Sigmoid colon (tissue), 7 donors: ENCODE measurements at regions of chr1 and their contacts with region 1.

Region 1: GRCh38 chr1:27556781-27557595 is 47.0 kb downstream of the AHDC1 start:
- DNase-seq: peak; percentile 98
- H3K4me3 ChIP-seq: peak overlapping the region in 3 of 4 donors; percentile 13 to 34 (median 34)
- H3K27ac ChIP-seq: peak overlapping the region; percentile 82 to 98 (median 90)
- H3K4me1 ChIP-seq: peaks cover 0 to 73% (median 68%) of the 10 kb centered on the region in 4 donors
- H3K27me3 ChIP-seq: no peaks in the 10 kb centered on the region
- CTCF ChIP-seq: peak; percentile 85 to 96 (median 94)
- EP300 ChIP-seq: no peak
- POLR2A ChIP-seq: no peak

Region 2: GRCh38 chr1:27402349-27402754 is 154.6 kb before region 1 on chr1:
- intact Hi-C with region 1: loop called (anchors 5 kb)
- DNase-seq: peak; percentile 91
- H3K4me3 ChIP-seq: no peak overlapping the region
- H3K27ac ChIP-seq: peak overlapping the region; percentile 79 to 88 (median 81)
- H3K4me1 ChIP-seq: peaks cover 0 to 83% (median 67%) of the 10 kb centered on the region in 4 donors
- H3K27me3 ChIP-seq: no peaks in the 10 kb centered on the region
- CTCF ChIP-seq: peak; percentile 14 to 60 (median 44)
- EP300 ChIP-seq: no peak
- POLR2A ChIP-seq: no peak

Region 3: DNA sequence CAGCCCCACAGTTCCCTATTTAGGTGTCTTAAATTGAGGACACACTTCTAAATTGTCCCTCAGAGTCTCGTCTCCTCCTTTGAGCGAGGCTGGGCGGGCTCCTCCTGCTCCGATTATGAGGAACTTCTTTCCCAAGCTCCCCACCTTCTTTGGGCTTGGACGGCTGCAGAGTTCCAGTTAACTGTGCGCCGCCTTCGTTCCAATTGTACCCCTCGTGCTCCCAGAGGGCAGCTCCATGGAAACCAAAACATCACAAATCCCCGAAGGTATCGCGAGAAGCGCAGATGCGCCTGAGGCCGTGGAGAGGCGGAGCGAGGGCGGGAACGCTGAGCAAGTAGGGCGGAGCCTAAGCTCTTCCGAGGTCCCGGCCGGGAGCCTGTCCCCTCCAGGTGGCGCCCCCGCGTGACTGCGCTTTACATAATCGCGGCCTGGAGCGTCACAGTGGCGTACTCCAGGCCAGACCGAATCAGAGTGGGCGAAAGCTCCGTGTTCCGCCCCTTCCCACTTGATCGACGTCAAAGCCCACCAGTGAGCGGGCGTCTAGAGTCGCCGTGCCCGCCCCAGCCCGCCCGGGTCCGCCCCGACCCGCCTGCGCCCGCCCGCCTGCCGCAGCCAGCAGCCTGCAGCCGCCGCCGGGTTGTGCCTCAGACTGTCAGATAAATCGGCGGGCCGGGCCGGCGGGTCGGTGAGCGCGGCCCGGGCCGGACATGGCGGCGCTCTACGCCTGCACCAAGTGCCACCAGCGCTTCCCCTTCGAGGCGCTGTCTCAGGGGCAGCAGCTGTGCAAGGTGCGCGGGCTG is 168.6 kb after region 1 on chr1 and contains the start of gene FAM76A:
- intact Hi-C with region 1: no loop called
- DNase-seq: peak; percentile 100
- H3K4me3 ChIP-seq: peak within 1 kb of the TSS; percentile 76 to 100 (median 87)
- H3K27ac ChIP-seq: peak within 1 kb of the TSS; percentile 93 to 99 (median 97)
- H3K4me1 ChIP-seq: peaks cover 0 to 19% (median 17%) of the 10 kb centered on the region in 4 donors
- H3K27me3 ChIP-seq: no peaks in the 10 kb centered on the region
- CTCF ChIP-seq: peak in 1 of 4 experiments; percentile 20
- EP300 ChIP-seq: no peak
- POLR2A ChIP-seq: peak in 1 of 2 donors; percentile 53
- total RNA-seq, gene FAM76A: 11.9 to 24.3 (median 19.1) TPM